Mammary epithelial cell (primary cell): ENCODE measurements at regions of chr11 and their contacts with region 1.

Region 1: GRCh38 chr11:5910540-5910939 is 17.5 kb downstream of the OR52E5 start:
- DNase-seq: no peak
- H3K4me3 ChIP-seq: no peak overlapping the region
- H3K27ac ChIP-seq: no peak overlapping the region
- H3K4me1 ChIP-seq: no peaks in the 10 kb centered on the region
- H3K27me3 ChIP-seq: no peaks in the 10 kb centered on the region
- CTCF ChIP-seq: no peak

Region 2: DNA sequence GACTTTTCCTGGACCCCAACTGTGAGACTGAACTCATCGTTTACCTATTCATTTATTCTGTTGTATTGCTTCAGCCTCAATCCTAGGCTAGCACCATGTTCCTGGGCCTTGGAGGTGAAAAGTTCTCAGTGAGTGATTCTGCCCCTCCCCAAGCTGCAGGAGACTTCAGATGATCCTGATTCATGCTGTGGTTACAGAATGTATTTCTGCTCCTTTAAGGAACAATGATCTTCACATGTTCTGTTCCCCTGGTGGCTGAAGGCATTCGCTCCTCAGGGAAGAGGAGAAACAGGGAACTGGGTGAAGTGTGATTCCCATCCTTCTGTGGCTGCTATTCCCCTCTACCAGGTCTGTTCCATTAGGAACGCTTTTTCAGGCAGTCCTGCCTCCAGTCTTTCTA is 838.7 kb before region 1 on chr11:
- CTCF ChIA-PET with region 1: no interaction called
- dilution Hi-C with region 1: no loop called
- in situ Hi-C with region 1: no loop called
- intact Hi-C with region 1: no loop called
- DNase-seq: peak; percentile 4
- H3K4me3 ChIP-seq: no peak overlapping the region
- H3K27ac ChIP-seq: no peak overlapping the region
- H3K4me1 ChIP-seq: no peaks in the 10 kb centered on the region
- H3K27me3 ChIP-seq: peaks cover 2% of the 10 kb centered on the region
- CTCF ChIP-seq: no peak

Region 3: GRCh38 chr11:5955586-5955985 is 45.0 kb after region 1 on chr11:
- CTCF ChIA-PET with region 1: no interaction called
- dilution Hi-C with region 1: no loop called
- in situ Hi-C with region 1: no loop called
- intact Hi-C with region 1: no loop called
- DNase-seq: no peak
- H3K4me3 ChIP-seq: no peak overlapping the region
- H3K27ac ChIP-seq: no peak overlapping the region
- H3K4me1 ChIP-seq: no peaks in the 10 kb centered on the region
- H3K27me3 ChIP-seq: peaks cover 2% of the 10 kb centered on the region
- CTCF ChIP-seq: no peak

Region 4: GRCh38 chr11:5992604-5993251 is 82.2 kb after region 1 on chr11:
- CTCF ChIA-PET with region 1: no interaction called
- dilution Hi-C with region 1: loop called (anchors 5 kb)
- in situ Hi-C with region 1: no loop called
- intact Hi-C with region 1: no loop called
- DNase-seq: peak; percentile 18
- H3K4me3 ChIP-seq: no peak overlapping the region
- H3K27ac ChIP-seq: no peak overlapping the region
- H3K4me1 ChIP-seq: no peaks in the 10 kb centered on the region
- H3K27me3 ChIP-seq: no peaks in the 10 kb centered on the region
- CTCF ChIP-seq: peak; percentile 49 to 65